BJ (cell line): ENCODE measurements at regions of chr2 and their contacts with region 1.

Region 1: DNA sequence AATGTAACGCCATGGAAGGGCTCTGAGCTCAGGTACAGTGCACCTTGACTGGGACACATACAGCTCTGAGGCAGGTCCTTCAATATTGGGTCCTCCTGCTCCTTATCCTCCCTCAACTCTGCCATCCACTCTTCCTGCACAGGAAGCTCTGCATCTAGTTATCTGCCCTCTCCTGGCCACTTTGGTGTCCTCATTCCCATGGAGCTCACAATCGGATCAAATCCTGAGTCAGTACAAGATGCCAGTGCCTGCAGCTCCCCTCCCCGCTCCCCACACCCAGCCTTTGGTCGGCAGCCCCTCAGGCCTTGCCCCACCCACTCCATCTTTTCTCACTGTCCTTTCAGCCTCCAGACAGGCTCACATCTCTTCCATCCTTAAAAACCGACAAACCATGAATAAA is 58.0 kb downstream of the LRRFIP1 start:
- DNase-seq: no peak
- H3K4me3 ChIP-seq: no peak overlapping the region
- H3K27me3 ChIP-seq: no peaks in the 10 kb centered on the region
- CTCF ChIP-seq: peak; percentile 47

Region 2: GRCh38 chr2:237594514-237594871 is 90.9 kb before region 1 on chr2:
- CTCF ChIA-PET with region 1: no interaction called
- POLR2A ChIA-PET with region 1: no interaction called
- DNase-seq: no peak
- H3K4me3 ChIP-seq: no peak overlapping the region
- H3K27me3 ChIP-seq: no peaks in the 10 kb centered on the region
- CTCF ChIP-seq: no peak

Region 3: DNA sequence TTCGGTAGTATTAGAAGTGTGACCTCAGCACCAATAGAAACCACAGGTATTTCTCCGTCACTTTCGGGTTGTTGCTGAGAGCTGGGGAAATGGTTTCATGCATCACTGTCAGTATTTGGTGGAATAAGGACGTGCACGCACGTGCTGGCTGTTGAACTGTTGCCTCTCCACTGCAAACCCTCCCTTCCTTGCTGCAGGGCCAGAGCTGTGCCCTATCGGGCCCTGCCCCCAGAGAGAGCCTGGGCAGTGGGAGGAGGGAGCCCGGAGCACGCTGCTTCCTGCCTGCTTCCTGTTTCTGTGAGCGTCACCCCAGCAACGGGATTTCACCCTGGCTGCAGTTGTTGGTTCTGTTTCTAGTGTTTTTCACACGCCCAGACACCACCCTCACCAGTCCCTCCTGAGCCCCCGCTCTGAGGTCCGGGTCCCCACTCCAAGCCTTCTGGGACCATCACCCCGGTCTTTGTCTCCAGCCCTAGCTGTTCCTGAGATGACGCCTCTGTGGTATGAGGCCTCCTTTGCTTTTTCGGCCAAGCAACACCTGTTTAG is 10.6 kb before region 1 on chr2:
- CTCF ChIA-PET with region 1: interaction called, 11 read pairs
- POLR2A ChIA-PET with region 1: interaction called, 5 read pairs
- DNase-seq: peak; percentile 47
- H3K4me3 ChIP-seq: no peak overlapping the region
- H3K27me3 ChIP-seq: no peaks in the 10 kb centered on the region
- CTCF ChIP-seq: no peak